ENCODE measurements at regions of chr12 and their contacts with region 1.

Region 1: DNA sequence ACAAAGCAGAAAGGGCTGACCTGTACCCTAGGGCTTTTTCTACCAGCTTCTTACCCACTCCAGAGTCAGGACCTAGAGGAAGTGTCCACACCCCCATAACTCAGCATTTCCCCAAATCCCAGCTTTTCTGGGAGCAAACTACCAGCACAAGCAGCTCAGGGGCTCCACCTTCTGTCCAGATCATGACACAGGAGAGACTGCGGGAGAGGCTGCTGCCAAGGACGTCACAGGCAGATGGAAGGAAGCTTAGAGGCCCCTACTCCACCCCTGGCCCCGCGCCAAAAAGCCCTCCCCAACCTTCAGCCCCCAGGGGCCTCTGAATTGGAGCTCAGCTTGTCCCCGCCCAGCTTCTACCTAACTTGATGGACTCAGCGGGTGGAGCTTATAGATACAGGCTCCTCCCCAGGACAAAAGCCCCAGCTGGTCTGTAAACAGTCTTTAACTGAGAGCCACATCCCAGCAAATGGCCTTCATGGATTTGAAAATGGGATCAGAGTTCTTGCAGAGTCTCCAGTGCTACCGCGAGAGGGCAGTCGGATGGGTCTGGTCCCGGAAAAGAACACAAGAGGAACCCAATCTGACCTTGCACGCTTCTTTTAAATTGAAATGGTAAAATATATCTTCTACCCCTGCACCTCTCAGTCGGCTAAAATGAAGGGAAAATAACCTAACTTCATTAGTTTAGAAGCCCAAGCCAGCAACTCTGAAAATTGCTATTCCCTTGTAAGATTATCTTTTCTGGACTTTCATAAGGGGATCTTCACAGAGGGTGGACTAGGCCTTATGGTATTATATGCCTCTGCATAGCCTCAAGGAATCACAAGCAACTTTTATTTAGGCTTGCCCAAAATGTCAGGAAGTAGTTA is 6.8 kb upstream of the BAZ2A start:
- DNase-seq: peak; percentile 99
- H3K4me3 ChIP-seq: peak overlapping the region; percentile 77
- CTCF ChIP-seq: peak; percentile 90

Region 2: DNA sequence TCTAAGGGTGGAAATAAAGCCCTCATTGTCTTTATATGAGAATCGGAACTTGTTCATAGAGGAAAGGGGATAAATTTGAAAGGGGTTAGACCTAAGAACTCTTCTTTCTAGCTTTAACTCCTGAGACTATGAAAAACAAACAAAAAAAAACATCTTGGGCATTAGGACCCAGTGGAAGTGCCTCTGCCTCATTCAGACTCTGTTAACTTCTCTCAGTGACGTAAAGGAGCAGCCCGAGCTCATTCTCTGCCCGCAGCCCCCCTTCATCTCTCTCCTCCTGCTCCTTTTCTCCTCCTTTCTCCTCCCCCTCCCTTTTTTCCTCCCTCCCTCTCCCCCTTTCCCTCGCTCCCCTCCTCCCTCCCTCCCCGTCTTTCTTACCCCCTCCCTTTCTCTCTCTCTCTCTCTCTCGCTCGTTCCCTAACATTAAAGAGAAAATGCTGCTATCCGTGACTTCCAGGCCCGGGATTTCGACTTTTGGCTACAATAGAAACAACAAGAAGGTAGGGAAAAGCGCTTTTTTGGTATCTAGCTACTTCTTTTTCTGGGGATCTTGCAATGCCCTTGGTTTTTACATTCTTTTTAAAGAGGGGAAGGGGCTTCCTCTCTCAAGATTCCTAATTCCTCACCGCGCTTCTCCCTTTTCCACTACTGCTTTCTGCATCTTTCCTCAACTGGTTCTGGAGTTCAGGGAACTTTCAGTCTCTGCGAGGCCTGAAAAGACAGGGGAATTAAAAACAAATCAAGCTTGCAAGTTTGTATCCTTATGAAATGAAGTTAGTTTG is 115.1 kb before region 1 on chr12 and contains the start of gene RBMS2:
- CTCF ChIA-PET with region 1: interaction called, 94 read pairs
- POLR2A ChIA-PET with region 1: interaction called, 9 read pairs
- DNase-seq: peak; percentile 63
- H3K4me3 ChIP-seq: peak within 1 kb of the TSS; percentile 60
- CTCF ChIP-seq: no peak

Region 3: GRCh38 chr12:56601503-56601902 is 35.4 kb before region 1 on chr12:
- CTCF ChIA-PET with region 1: interaction called, 16 read pairs
- POLR2A ChIA-PET with region 1: interaction called, 4 read pairs
- DNase-seq: no peak
- H3K4me3 ChIP-seq: no peak overlapping the region
- CTCF ChIP-seq: peak; percentile 16

Region 4: GRCh38 chr12:56661979-56662638 is 25.2 kb after region 1 on chr12:
- CTCF ChIA-PET with region 1: interaction called, 10 read pairs
- POLR2A ChIA-PET with region 1: no interaction called
- DNase-seq: no peak
- H3K4me3 ChIP-seq: no peak overlapping the region
- CTCF ChIP-seq: no peak

Region 5: DNA sequence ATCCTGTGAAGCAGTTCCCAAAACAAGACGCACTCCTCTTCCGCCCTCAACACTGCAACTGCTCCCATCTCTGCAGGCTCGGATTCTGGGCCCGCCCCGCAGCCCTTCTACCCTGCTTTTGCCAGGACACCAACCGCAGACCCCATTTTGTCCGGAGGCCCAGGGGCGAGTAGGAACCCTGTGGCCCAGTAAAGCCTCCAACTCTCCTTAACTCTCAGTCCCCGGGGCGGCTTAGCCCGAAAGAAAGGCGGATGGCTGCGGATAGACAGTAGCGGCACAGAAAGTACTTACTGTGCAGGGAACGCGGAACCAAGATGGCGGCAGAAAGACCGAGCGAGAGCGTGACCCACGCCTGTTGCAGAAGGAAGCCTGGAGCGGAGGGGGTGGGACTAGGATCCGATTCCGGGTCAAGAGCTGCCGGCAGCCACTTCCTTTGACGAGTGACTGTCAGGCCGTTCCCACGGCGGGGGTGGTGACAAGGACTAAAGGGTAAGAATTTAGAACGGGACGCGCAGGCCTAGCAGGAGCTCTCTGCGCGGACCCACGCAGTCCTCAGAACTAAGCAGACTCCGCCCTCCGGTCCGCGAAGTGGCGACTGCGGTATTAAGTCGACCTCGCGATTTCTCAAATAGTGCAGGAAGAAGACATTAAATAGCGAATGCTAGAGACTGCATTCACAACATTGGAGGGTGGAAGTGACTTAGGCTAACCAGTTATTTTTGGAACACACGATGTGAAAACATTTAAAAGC is 88.2 kb after region 1 on chr12 and contains the start of gene NACA:
- CTCF ChIA-PET with region 1: interaction called, 5 read pairs
- POLR2A ChIA-PET with region 1: interaction called, 12 read pairs
- DNase-seq: peak; percentile 93
- H3K4me3 ChIP-seq: peak within 1 kb of the TSS; percentile 99
- CTCF ChIP-seq: no peak

Measured in AG04449 (cell line).